Ascending aorta (tissue), 2 donors: ENCODE measurements at regions of chr4 and their contacts with region 1.

Region 1: GRCh38 chr4:114378306-114378903 is 220.2 kb upstream of the UGT8 start:
- DNase-seq: no peak
- H3K4me3 ChIP-seq: no peak overlapping the region
- H3K27ac ChIP-seq: no peak overlapping the region
- H3K4me1 ChIP-seq: no peaks in the 10 kb centered on the region
- H3K27me3 ChIP-seq: no peaks in the 10 kb centered on the region
- CTCF ChIP-seq: peak in 2 of 3 experiments; percentile 58 to 68

Region 2: DNA sequence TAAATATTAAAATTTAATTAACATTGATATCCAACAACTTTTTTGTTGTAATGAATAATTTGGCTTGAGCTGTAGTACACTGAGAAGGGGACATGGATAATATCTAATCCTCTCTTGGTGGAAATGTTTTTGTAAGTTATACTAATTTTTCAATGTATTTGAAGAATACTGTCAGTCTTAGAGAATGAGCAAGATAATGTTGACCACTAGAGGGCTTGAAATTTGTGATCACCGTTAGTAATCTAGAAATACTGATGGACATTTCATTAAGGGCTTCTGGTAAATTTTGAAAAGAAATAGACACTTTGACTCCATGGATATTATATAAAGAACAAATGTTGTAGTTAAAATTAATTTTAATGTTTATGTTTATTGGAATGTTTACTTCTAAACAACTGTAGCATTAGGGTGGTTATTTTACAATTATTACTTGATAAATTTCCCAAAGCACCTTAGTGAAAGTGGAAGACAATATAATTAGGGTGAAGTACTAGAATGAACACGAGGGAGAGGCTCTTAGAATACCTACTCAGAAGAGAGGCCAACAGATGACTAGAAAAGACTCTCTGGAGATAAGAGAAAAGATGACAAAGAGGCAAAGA is 596.9 kb before region 1 on chr4:
- intact Hi-C with region 1: loop called (anchors 5 kb)
- DNase-seq: no peak
- H3K4me3 ChIP-seq: no peak overlapping the region
- H3K27ac ChIP-seq: no peak overlapping the region
- H3K4me1 ChIP-seq: peaks cover 4% of the 10 kb centered on the region in 2 donors
- H3K27me3 ChIP-seq: no peaks in the 10 kb centered on the region
- CTCF ChIP-seq: peak; percentile 28 to 65 (median 59)

Region 3: DNA sequence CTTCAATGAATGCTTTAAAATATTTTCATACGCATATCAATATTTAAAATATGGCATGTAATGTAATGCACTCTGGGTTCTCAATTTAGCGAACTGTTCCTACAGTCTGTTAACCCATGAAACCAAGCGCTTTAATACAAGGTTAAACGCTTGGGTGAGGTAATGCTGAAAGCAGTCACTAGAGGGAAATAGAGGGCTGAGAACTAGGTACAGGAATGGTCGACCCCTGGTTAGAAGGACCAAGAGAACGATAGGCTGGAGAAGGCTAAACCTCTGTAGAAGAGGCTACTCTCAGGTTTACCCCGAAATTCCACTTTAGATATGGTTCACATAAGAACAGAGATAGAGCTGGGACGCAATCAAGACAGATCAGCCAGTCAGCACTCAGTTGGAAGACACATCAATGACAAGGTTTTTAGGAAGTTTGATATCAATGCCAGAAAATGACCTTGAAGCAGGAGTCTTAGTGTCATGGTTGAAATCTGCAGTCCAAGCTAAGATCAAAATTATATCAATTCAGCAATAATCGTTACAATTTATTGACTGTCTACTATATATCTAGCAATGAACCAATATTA is 425.9 kb before region 1 on chr4:
- intact Hi-C with region 1: loop called (anchors 5 kb)
- DNase-seq: no peak
- H3K4me3 ChIP-seq: no peak overlapping the region
- H3K27ac ChIP-seq: no peak overlapping the region
- H3K4me1 ChIP-seq: peaks cover 0 to 7% of the 10 kb centered on the region in 2 donors
- H3K27me3 ChIP-seq: no peaks in the 10 kb centered on the region
- CTCF ChIP-seq: peak; percentile 49 to 71 (median 68)

Region 4: DNA sequence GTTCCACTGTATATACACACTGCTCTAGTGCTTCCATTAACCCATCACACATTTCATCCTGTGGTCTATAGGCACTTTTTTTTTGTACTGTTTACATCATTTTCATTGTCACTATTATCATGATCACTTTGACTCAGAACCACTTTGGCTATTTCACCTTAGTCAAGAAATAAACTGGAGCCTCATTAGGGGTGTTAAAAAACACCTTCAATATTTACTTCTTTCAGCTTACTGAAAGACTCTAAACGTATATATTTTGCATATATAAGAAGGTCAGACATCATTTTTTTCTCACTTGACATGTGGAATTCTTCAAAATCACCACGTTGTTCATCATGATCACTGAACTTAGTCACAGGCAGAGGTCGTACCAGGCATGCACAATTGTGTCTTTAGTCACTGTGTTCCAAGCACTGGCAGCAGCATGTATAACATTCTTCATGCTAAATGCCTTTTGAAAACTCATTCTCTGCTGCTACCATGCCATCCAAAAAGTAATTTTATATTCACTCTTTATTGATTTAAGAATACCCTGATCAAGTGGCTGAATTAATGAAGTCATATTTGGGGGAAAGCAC is 169.7 kb before region 1 on chr4:
- intact Hi-C with region 1: loop called (anchors 2 kb)
- DNase-seq: no peak
- H3K4me3 ChIP-seq: no peak overlapping the region
- H3K27ac ChIP-seq: no peak overlapping the region
- H3K4me1 ChIP-seq: no peaks in the 10 kb centered on the region
- H3K27me3 ChIP-seq: no peaks in the 10 kb centered on the region
- CTCF ChIP-seq: peak in 2 of 3 experiments; percentile 12 to 49

Region 5: DNA sequence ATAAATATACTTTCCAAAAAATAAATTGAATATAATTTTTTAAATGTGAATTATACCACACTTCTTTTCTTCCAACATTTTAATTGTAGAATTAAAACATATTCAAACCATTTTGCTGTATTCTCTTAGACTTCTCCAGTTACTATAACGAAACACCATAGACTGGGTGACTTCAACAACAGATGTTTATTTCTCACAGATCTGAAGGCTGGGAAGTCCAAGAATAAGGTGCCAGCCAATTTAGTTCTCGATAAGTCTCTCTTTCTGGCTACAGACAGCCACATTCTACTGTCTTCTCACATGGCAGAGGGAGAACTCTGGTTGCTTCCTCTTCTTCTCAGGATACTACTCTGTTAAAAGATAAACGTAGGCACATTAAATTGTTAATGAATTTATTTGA is 64.5 kb after region 1 on chr4:
- intact Hi-C with region 1: no loop called
- DNase-seq: no peak
- H3K4me3 ChIP-seq: no peak overlapping the region
- H3K27ac ChIP-seq: no peak overlapping the region
- H3K4me1 ChIP-seq: no peaks in the 10 kb centered on the region
- H3K27me3 ChIP-seq: no peaks in the 10 kb centered on the region
- CTCF ChIP-seq: no peak